Gastrocnemius medialis (tissue), 4 donors: ENCODE measurements at regions of chr6 and their contacts with region 1.

Region 1: GRCh38 chr6:26342106-26343004 is 22.6 kb upstream of the BTN3A2 start:
- DNase-seq: no peak
- ATAC-seq: no peak
- H3K4me3 ChIP-seq: no peak overlapping the region
- H3K27ac ChIP-seq: no peak overlapping the region
- H3K4me1 ChIP-seq: no peaks in the 10 kb centered on the region
- H3K27me3 ChIP-seq: peaks cover 4 to 16% (median 8%) of the 10 kb centered on the region in 3 donors
- CTCF ChIP-seq: no peak
- POLR2A ChIP-seq: no peak

Region 2: GRCh38 chr6:26581164-26581915 is 239.0 kb after region 1 on chr6:
- in situ Hi-C with region 1: loop called in 2 of 4 experiments (anchors 10 kb)
- intact Hi-C with region 1: no loop called
- DNase-seq: no peak
- ATAC-seq: no peak
- H3K4me3 ChIP-seq: no peak overlapping the region
- H3K27ac ChIP-seq: no peak overlapping the region
- H3K4me1 ChIP-seq: no peaks in the 10 kb centered on the region
- H3K27me3 ChIP-seq: peaks cover 0 to 45% (median 12%) of the 10 kb centered on the region in 3 donors
- CTCF ChIP-seq: no peak
- POLR2A ChIP-seq: no peak